ENCODE measurements at regions of chr5 and their contacts with region 1.

Region 1: DNA sequence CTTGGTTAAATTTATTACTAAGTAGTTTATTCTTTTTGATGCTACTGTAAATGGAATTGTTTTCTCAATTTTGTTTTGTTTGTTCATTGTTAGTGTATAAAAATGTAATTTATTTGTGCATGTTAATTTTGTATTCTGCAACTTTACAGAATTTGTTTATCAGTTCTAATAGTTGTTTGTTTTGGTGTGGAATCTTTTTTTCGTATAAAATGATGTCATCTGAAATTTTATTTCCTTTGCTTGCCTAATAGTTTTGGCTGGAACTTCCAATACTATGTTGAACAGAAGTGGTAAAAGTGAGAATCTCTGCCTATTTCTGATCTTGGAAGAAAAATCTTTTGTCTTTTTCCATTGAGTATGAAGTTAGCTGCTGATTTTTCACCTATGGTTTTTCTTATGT is 947.3 kb upstream of the NUDT12 start:
- DNase-seq: no peak
- H3K4me3 ChIP-seq: no peak overlapping the region
- H3K27ac ChIP-seq: no peak overlapping the region
- H3K4me1 ChIP-seq: peaks cover 0 to 13% (median 0%) of the 10 kb centered on the region in 4 donors
- H3K27me3 ChIP-seq: no peaks in the 10 kb centered on the region
- CTCF ChIP-seq: no peak
- EP300 ChIP-seq: no peak
- POLR2A ChIP-seq: no peak

Region 2: DNA sequence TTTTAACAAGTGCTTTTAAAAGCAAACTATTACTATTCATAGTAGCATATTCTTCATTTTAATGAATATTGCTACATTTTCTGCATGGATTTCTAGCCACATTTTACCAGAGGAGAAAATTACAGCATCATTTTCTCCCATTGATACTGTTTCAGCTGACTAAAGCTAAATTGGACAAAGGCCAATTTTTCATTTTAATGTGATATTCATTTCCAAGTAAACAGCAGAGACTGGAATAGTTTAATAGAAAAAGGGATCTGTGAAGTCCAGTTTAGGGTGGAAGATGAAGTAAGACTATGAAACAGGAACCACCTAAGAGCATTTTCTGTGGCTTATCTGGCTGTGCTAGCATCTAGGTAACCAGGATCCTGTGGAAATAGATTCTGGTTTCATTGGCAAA is 1518.1 kb before region 1 on chr5:
- in situ Hi-C with region 1: no loop called
- intact Hi-C with region 1: no loop called
- DNase-seq: no peak
- H3K4me3 ChIP-seq: no peak overlapping the region
- H3K27ac ChIP-seq: no peak overlapping the region
- H3K4me1 ChIP-seq: no peaks in the 10 kb centered on the region
- H3K27me3 ChIP-seq: no peaks in the 10 kb centered on the region
- CTCF ChIP-seq: no peak
- EP300 ChIP-seq: no peak
- POLR2A ChIP-seq: no peak

Region 3: DNA sequence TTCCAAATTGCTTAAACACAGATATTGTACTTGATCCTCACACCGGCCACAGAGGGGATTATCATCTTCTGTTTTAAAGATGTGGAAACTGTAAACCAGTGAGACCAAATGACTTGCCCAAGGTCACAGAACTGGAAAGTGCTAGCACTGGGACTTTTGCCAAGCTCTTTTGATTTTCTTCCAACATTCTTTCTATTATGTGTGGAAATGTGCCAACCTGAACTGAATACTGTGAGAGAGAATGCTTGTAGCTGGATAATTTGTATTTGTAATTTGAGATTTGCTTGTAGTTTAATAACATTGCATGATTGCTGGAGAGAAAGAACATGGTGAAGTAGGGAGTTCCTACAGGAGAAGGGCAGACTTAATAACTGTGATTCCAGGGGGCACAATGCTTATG is 30.5 kb after region 1 on chr5:
- in situ Hi-C with region 1: no loop called
- intact Hi-C with region 1: no loop called
- DNase-seq: peak; percentile 11
- H3K4me3 ChIP-seq: no peak overlapping the region
- H3K27ac ChIP-seq: peak overlapping the region in 3 of 4 donors; percentile 22 to 79 (median 61)
- H3K4me1 ChIP-seq: peaks cover 0 to 14% (median 0%) of the 10 kb centered on the region in 4 donors
- H3K27me3 ChIP-seq: no peaks in the 10 kb centered on the region
- CTCF ChIP-seq: no peak
- EP300 ChIP-seq: no peak
- POLR2A ChIP-seq: no peak

Region 4: GRCh38 chr5:105773241-105773640 is 1263.3 kb after region 1 on chr5:
- in situ Hi-C with region 1: no loop called
- intact Hi-C with region 1: loop called (anchors 5 kb)
- DNase-seq: no peak
- H3K4me3 ChIP-seq: no peak overlapping the region
- H3K27ac ChIP-seq: no peak overlapping the region
- H3K4me1 ChIP-seq: no peaks in the 10 kb centered on the region
- H3K27me3 ChIP-seq: no peaks in the 10 kb centered on the region
- CTCF ChIP-seq: no peak
- EP300 ChIP-seq: no peak
- POLR2A ChIP-seq: no peak